ENCODE measurements at regions of chr9 and their contacts with region 1.

Region 1: DNA sequence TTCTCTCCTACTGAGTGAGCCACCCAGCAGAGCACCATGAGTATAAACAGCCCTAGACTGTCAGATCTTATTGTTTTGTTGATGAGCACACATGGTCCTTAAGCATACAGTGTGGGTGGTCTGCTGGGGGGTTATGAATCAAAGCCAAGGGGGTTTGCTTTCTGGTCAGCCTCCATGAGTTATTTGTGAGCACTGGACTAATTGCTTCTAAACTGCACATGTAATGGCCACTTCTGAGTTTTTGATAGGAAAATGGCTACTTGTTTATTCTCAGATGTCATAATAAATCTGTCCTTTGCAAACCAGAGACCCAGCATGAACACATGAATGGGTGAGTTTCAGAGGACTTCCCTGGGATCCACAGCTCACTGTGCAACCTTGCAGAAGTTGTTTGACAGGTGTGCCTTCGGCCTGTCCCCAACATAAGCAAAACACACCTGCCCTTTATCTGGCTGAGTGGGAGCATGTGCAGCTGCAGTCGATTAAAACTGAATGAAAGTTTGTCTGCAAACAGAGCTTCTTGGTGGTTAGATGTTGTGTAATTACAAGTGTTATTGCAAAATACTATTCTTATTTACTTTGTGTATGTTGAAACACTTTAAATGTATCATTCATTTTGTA is 35.9 kb downstream of the MAMDC2 start:
- DNase-seq: no peak
- H3K4me3 ChIP-seq: no peak overlapping the region
- CTCF ChIP-seq: no peak
- POLR2A ChIP-seq: no peak

Region 2: DNA sequence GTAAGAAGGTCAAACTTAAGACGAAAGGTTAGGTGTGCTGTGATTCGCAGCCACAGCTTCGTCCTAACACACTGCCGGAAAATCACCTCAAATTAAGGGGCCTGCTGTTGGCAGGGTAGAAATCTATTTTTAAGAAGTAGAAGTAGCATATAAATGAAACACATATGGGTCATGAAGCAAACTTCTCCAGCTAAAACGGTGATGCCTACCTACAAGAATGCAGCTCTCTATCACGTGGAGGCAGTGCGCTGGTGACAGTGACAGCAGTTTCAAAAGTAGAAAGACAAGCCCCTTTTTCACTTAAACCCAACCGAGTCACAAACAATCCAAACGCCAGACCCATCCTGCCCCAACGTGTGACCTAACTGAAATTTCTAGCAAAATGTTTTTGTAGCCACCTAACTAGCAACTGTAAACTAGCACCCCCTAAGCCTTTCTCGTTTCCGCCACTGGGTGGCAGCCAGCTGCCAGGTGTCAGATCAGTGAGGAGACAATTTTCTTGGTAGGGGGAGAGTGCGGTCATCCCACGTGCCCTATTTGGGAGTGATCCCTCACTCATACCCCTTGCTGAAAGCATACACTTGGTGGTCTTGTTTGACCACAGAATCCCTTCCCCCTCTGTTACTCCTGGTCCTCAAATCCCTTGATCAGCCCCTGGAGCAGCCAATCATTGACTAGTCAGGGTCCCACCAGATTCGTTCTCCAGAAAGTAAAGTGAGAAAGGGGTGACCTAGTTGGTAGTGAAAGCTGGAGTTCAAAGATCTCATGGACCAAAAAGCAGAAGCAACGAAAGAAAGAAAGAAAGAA is 107.7 kb before region 1 on chr9:
- intact Hi-C with region 1: no loop called
- DNase-seq: peak; percentile 72 to 95
- H3K4me3 ChIP-seq: no peak overlapping the region
- CTCF ChIP-seq: peak in 1 of 3 donors; percentile 71
- POLR2A ChIP-seq: no peak

Region 3: GRCh38 chr9:70100362-70100761 is 20.8 kb after region 1 on chr9:
- intact Hi-C with region 1: no loop called
- DNase-seq: no peak
- H3K4me3 ChIP-seq: no peak overlapping the region
- CTCF ChIP-seq: no peak
- POLR2A ChIP-seq: no peak

Region 4: DNA sequence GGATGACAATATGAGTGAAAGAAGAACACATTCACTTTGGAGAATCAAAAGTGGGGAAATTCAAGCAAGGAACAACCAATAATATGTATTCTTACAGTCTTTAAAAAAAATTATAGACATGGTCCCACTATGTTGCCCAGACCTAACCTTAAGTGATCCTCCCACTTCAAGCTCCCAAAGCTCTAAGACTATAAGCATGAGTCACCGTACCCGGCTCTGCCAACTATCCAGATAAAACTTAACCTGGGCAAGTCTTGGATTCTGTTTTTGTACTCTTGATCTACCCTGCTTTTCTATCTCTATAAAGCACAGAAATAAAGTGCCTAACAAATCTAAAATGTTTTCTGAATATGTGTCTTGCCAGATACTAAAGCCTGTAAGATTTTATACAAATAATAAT is 1657.9 kb after region 1 on chr9:
- intact Hi-C with region 1: loop called (anchors 5 kb)
- DNase-seq: no peak
- H3K4me3 ChIP-seq: no peak overlapping the region
- CTCF ChIP-seq: no peak
- POLR2A ChIP-seq: no peak

Measured in lower leg skin (tissue), 4 donors.